ENCODE measurements at regions of chr12 and their contacts with region 1.

Region 1: DNA sequence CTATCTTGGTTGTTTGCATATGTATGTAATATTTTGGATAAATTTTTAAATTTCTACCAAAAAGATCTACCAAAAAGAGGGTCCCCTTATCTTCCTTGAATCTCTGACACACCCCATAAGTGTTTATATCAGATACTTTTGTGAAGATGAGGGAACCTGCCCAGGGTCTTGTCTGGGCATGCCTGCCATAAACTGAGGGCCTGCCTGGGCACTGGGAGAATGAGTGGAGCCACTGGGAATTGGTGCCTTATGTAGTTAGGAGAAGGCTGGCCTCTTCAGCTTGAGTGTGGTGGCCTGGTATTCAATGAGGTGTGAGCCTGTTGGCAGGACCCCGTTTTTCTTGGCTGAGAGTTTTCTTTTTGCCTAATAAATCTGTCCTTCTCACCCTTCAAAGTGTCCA is 46.5 kb downstream of the OR9K2 start:
- DNase-seq: no peak
- ATAC-seq: no peak
- H3K4me3 ChIP-seq: no peak overlapping the region
- H3K27ac ChIP-seq: no peak overlapping the region
- H3K4me1 ChIP-seq: no peaks in the 10 kb centered on the region
- H3K27me3 ChIP-seq: no peaks in the 10 kb centered on the region
- CTCF ChIP-seq: no peak
- POLR2A ChIP-seq: no peak

Region 2: DNA sequence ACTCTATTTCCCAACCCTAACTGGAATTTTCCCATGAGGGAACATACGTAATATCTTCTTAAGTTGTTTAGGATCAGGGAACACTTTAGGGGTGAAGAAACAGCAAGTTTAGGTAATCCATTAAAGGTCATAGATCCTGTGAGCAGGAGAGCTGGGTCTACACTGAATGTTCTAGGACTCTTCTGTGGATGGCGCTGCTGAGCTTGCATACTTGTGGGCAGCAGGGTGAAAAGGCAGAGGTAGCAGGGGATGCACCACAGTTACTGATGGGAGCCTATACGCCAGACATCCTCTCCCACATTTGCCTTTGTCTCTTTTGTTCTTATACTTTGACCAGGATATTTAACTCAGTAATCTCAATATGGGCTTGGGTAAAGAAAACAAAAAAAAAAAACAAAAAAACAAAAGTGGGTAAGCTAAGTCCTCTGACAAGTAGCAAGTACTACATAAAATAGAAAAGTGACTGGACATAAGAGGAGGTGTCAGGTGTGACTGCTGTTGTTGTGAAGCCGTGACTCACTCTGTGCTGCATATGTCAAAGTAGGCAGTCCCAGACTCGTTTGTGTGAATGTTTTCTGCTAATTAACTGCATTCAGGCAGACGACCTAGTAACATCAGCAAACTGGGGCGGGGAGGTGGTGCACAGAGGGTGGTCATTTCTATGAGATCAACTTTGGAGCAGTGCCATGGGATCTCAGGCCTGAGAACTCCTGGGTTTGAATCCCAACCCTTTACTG is 121.3 kb before region 1 on chr12:
- intact Hi-C with region 1: no loop called
- DNase-seq: no peak
- ATAC-seq: no peak
- H3K4me3 ChIP-seq: no peak overlapping the region
- H3K27ac ChIP-seq: no peak overlapping the region
- H3K4me1 ChIP-seq: no peaks in the 10 kb centered on the region
- H3K27me3 ChIP-seq: peaks cover 0 to 9% (median 0%) of the 10 kb centered on the region in 9 donors
- CTCF ChIP-seq: no peak
- POLR2A ChIP-seq: no peak

Region 3: GRCh38 chr12:55296469-55296868 is 123.8 kb after region 1 on chr12 and contains the start of gene OR6C6:
- intact Hi-C with region 1: no loop called
- DNase-seq: no peak
- ATAC-seq: no peak
- H3K4me3 ChIP-seq: no peak within 1 kb of the TSS
- H3K27ac ChIP-seq: no peak within 1 kb of the TSS
- H3K4me1 ChIP-seq: no peaks in the 10 kb centered on the region
- H3K27me3 ChIP-seq: no peaks in the 10 kb centered on the region
- CTCF ChIP-seq: no peak
- POLR2A ChIP-seq: no peak
- total RNA-seq, gene OR6C6: not detected

Region 4: DNA sequence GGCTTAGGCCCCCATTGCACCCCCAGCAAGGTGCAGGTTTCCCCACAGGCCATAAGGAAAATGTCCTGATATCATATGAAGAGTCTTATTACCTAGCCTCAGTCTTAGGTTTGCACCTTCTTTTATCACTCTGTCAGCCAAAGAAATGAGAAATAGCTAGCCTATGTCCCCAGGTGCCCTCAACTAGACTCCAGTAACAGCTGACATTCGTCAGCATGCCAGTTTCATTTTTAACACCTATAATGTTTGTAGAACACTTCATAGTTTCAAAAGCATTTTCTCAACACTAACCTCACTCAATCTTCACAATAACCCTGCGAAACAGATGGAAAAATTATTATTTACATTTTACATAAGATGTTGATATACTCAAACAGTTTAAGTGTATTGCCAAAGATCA is 440.0 kb after region 1 on chr12:
- intact Hi-C with region 1: loop called in 1 of 10 experiments (anchors 5 kb)
- DNase-seq: no peak
- ATAC-seq: no peak
- H3K4me3 ChIP-seq: no peak overlapping the region
- H3K27ac ChIP-seq: no peak overlapping the region
- H3K4me1 ChIP-seq: no peaks in the 10 kb centered on the region
- H3K27me3 ChIP-seq: peaks cover 0 to 12% (median 0%) of the 10 kb centered on the region in 9 donors
- CTCF ChIP-seq: no peak
- POLR2A ChIP-seq: no peak

Region 5: GRCh38 chr12:56020423-56021184 is 847.9 kb after region 1 on chr12 and contains the start of gene IKZF4:
- intact Hi-C with region 1: no loop called
- DNase-seq: peak in 3 of 5 donors; percentile 27 to 61 (median 47)
- ATAC-seq: peak; percentile 60 to 72 (median 62)
- H3K4me3 ChIP-seq: peak within 1 kb of the TSS in 9 of 12 donors; percentile 0 to 49 (median 38)
- H3K27ac ChIP-seq: peak within 1 kb of the TSS in 10 of 12 donors; percentile 4 to 80 (median 52)
- H3K4me1 ChIP-seq: peaks cover 0 to 21% (median 6%) of the 10 kb centered on the region in 12 donors
- H3K27me3 ChIP-seq: no peaks in the 10 kb centered on the region
- CTCF ChIP-seq: no peak
- POLR2A ChIP-seq: no peak
- total RNA-seq, gene IKZF4: 4.3 to 10.3 (median 6.9) TPM

Measured in heart left ventricle (tissue), 16 donors.